ENCODE measurements at regions of chr15 and their contacts with region 1.

Region 1: DNA sequence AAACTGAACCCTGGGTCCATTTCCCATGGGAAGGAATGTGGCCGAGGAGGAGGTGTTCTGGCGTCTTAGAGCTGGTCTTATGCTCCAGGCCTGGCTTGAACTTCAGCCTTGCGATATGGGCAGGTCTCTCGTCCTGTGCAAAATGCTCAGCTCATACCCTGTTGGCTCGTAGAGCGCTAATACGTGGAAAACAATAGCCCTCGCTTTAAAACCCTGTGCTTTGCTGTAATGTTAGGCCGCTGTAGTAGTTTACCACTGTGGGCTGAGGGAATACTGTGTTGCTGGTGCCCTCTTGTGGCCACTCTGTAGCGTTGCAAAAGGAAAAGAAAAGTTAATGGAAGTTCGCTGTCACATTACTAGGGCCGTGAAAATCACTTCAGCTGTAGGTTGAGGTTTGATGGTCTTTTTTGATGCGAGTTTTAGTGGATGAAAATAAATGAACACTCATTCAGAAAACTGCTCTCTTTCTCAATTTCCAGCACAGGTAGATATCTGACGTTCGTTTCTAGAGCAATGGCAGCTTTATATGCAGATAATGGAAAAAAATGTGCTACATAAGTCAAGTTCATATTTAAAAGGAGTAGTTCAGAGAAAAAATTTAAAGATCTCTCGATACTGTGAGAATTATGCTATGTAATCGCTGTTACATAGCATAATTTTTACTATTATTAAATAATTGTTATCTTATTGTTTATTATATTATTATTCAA is 92.9 kb downstream of the MCTP2 start:
- DNase-seq: peak; percentile 82
- ATAC-seq: peak; percentile 91
- H3K4me3 ChIP-seq: no peak overlapping the region
- H3K4me3 Mint-ChIP-seq: no peak overlapping the region
- H3K27ac ChIP-seq: no peak overlapping the region
- H3K27ac Mint-ChIP-seq: peak overlapping the region; percentile 67
- H3K4me1 ChIP-seq: peaks cover 3 to 8% of the 10 kb centered on the region in 2 donors
- H3K4me1 Mint-ChIP-seq: peaks cover 22% of the 10 kb centered on the region
- H3K27me3 ChIP-seq: no peaks in the 10 kb centered on the region
- H3K27me3 Mint-ChIP-seq: no peaks in the 10 kb centered on the region
- CTCF ChIP-seq: peak; percentile 92

Region 2: GRCh38 chr15:93703092-93703739 is 621.1 kb before region 1 on chr15:
- CTCF ChIA-PET with region 1: no interaction called
- POLR2A ChIA-PET with region 1: no interaction called
- intact Hi-C with region 1: no loop called
- DNase-seq: no peak
- ATAC-seq: no peak
- H3K4me3 ChIP-seq: no peak overlapping the region
- H3K4me3 Mint-ChIP-seq: no peak overlapping the region
- H3K27ac ChIP-seq: no peak overlapping the region
- H3K27ac Mint-ChIP-seq: no peak overlapping the region
- H3K4me1 ChIP-seq: no peaks in the 10 kb centered on the region
- H3K4me1 Mint-ChIP-seq: no peaks in the 10 kb centered on the region
- H3K27me3 ChIP-seq: no peaks in the 10 kb centered on the region
- H3K27me3 Mint-ChIP-seq: no peaks in the 10 kb centered on the region
- CTCF ChIP-seq: no peak

Region 3: GRCh38 chr15:94131875-94132274 is 192.4 kb before region 1 on chr15:
- CTCF ChIA-PET with region 1: interaction called, 10 read pairs
- POLR2A ChIA-PET with region 1: no interaction called
- intact Hi-C with region 1: no loop called
- DNase-seq: no peak
- ATAC-seq: no peak
- H3K4me3 ChIP-seq: no peak overlapping the region
- H3K4me3 Mint-ChIP-seq: no peak overlapping the region
- H3K27ac ChIP-seq: no peak overlapping the region
- H3K27ac Mint-ChIP-seq: no peak overlapping the region
- H3K4me1 ChIP-seq: no peaks in the 10 kb centered on the region
- H3K4me1 Mint-ChIP-seq: no peaks in the 10 kb centered on the region
- H3K27me3 ChIP-seq: peaks cover 0 to 5% (median 0%) of the 10 kb centered on the region in 4 experiments
- H3K27me3 Mint-ChIP-seq: peaks cover 14% of the 10 kb centered on the region
- CTCF ChIP-seq: no peak

Region 4: GRCh38 chr15:94225616-94226015 is 98.7 kb before region 1 on chr15:
- CTCF ChIA-PET with region 1: interaction called, 97 read pairs
- POLR2A ChIA-PET with region 1: interaction called, 3 read pairs
- intact Hi-C with region 1: no loop called
- DNase-seq: no peak
- ATAC-seq: no peak
- H3K4me3 ChIP-seq: no peak overlapping the region
- H3K4me3 Mint-ChIP-seq: no peak overlapping the region
- H3K27ac ChIP-seq: no peak overlapping the region
- H3K27ac Mint-ChIP-seq: no peak overlapping the region
- H3K4me1 ChIP-seq: peaks cover 18 to 19% of the 10 kb centered on the region in 2 donors
- H3K4me1 Mint-ChIP-seq: peaks cover 21% of the 10 kb centered on the region
- H3K27me3 ChIP-seq: no peaks in the 10 kb centered on the region
- H3K27me3 Mint-ChIP-seq: no peaks in the 10 kb centered on the region
- CTCF ChIP-seq: no peak

Region 5: DNA sequence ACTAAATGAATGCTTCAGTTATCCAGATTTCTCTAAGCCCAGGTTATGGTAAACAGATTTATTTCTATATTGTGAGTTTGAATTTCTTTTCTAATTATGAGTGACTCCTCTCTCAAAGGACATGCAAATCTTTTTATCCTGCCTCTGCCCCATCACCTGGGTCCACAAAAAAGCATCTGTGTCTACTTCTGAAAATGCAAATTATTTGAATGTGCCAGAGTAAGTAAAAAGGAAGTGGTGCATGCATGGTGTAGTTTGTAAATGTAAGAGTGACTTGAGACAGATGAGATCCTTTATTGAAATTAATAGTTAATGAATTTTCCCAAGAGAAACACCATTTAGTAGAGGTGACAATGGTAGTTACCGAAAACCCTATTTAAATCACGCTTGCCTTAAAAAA is 66.0 kb before region 1 on chr15:
- CTCF ChIA-PET with region 1: interaction called, 20 read pairs
- POLR2A ChIA-PET with region 1: no interaction called
- intact Hi-C with region 1: no loop called
- DNase-seq: peak; percentile 85
- ATAC-seq: peak; percentile 74
- H3K4me3 ChIP-seq: peak overlapping the region in 3 of 5 experiments; percentile 18 to 25 (median 20)
- H3K4me3 Mint-ChIP-seq: peak overlapping the region; percentile 59
- H3K27ac ChIP-seq: peak overlapping the region; percentile 72 to 78
- H3K27ac Mint-ChIP-seq: peak overlapping the region; percentile 79
- H3K4me1 ChIP-seq: peaks cover 79 to 82% of the 10 kb centered on the region in 2 donors
- H3K4me1 Mint-ChIP-seq: peaks cover 83% of the 10 kb centered on the region
- H3K27me3 ChIP-seq: no peaks in the 10 kb centered on the region
- H3K27me3 Mint-ChIP-seq: no peaks in the 10 kb centered on the region
- CTCF ChIP-seq: no peak

Region 6: DNA sequence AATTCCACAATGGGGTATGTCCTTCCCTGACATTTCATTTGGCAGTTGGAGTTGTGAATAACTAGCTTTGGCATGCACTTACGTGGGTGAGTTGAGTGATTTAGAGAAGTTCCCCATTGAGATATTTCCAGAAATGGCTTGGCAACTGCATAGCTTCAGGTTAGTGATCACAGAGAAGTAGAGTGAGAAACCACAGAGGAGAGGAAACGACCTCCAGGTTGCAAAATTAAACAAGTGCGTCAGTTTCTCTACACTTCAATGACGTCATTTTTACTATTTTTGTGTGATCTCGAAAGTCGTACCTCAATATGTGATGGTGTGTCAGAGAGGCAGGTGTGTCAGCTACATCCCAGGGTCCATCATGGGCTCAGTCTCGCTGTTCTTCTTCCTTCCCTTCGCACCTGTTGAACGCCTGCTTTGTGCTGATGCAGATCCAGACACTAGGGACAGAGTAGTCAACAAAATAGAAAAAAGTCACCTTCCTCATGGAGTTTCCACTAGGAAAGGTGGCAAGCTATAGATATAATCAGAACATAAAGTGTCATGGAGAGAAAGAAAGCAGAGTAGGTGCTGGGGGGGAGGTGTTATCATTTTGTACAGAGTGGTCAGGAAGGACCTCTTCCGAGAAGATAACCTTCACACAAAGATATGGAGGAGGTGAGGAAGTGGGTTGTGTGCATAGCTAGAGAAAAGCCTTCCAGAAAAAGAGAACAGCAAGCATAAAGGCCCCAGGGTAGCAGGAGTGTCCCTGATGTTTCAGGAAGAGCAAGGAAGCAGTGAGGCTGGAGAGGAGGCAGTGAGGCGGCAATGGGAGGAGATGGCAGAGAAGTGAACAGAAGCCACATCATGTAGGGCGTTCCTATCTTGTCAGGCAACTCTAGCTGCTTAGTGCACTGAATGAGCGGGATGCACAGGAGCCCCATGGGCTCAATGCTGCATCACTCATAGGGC is 17.3 kb before region 1 on chr15:
- CTCF ChIA-PET with region 1: interaction called, 51 read pairs
- POLR2A ChIA-PET with region 1: no interaction called
- intact Hi-C with region 1: no loop called
- DNase-seq: peak; percentile 86
- ATAC-seq: peak; percentile 87
- H3K4me3 ChIP-seq: peak overlapping the region in 1 of 5 experiments; percentile 12
- H3K4me3 Mint-ChIP-seq: peak overlapping the region; percentile 64
- H3K27ac ChIP-seq: peak overlapping the region; percentile 58 to 64
- H3K27ac Mint-ChIP-seq: peak overlapping the region; percentile 91
- H3K4me1 ChIP-seq: peaks cover 27 to 41% of the 10 kb centered on the region in 2 donors
- H3K4me1 Mint-ChIP-seq: peaks cover 50% of the 10 kb centered on the region
- H3K27me3 ChIP-seq: no peaks in the 10 kb centered on the region
- H3K27me3 Mint-ChIP-seq: no peaks in the 10 kb centered on the region
- CTCF ChIP-seq: no peak

Measured in B cell (primary cell).